ENCODE measurements at regions of chr3 and their contacts with region 1.

Region 1: DNA sequence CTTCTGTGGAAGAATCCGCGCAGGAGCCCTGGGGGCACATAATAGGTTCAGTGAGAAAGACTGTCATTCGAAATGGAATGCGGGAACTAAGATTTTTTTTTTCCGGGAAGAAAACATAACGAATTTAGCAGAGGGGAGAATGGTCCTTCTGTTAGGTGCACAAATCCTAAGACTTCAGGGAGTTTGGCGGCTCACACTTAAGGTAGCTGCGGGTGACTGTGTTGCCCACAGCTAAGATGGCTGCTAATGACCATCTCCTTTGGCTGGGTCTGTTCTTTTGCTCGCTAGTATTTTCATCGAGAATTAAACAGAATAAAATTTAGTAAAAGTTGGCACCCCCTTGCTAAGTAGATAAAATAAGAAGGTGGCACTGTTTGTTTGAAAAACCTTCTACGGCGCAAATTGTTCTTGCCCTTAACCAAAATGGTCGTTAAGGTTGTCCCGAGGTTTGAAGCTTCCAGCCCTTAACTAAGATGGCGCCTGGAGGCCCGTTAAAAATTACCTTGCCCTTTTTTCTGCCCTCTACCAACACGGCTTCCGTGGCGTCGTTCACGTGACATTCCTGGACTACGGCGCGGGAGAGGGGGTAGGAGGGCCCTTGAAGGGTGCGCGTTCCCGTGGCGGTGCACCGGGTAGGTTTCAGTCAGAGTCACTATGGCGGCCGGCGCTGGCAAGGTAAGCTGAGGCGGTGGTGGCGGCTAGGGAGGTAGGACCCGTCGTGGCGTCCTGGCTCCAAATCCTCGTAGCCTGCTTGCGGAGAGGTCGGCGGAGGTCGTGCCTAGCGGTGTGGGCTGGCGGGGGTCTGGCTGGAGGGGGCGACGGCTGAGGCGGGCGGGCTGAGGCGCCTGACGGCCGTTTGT is at the start of gene SLMAP:
- DNase-seq: peak; percentile 94 to 97 (median 96)
- H3K4me3 ChIP-seq: peak within 1 kb of the TSS; percentile 98
- H3K27ac ChIP-seq: peak within 1 kb of the TSS; percentile 76 to 94
- H3K4me1 ChIP-seq: peaks cover 9% of the 10 kb centered on the region
- H3K27me3 ChIP-seq: no peaks in the 10 kb centered on the region
- CTCF ChIP-seq: no peak
- EP300 ChIP-seq: no peak
- POLR2A ChIP-seq: peak; percentile 53
- total RNA-seq, gene SLMAP: 45.8 to 113 (median 75.2) TPM

Region 2: DNA sequence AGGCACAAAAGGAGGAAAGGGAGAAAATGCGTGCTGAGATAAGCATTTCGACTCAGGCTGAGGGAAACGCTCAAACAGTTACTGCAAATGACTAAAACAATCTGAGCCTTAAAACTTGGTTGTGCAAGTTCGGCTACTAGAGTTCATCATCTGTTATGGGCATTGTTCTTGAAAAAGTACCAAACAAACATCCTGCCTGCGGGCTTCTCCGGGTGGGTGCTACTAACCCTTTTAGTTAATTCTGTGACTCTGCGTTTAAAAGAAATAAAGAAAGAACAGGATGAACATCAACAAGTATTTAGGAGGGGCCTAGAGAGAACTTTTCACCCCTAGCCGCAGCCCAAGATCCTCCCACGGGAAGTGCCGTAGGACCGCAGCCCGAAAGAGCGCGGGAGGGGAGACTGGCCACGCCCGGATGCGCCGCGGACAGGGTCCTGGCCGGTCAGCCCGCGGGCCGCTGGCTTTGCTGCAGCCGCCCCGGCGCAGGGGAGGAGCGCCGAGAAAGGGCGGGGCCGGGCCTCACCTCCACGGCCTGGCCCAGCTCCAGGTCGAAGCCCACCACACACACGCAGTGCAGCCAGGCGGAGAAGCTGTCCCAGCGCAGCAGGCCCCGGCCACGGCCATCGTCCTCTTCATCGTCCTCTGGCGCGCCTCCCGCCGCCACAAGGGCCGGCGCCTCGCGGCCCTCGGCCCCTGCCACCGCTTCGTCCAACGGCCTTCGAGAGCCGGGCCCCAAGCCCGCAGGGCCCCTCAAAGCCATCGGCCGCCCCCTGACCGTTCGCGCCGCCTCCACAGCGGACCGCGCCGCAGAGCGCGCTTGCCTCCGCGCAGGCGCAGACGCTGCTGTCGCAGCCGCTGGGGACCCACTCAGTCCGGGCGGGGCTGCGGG is 63.4 kb before region 1 on chr3 and contains the start of gene DENND6A:
- intact Hi-C with region 1: loop called in 1 of 4 experiments (anchors 5 kb)
- DNase-seq: peak; percentile 93 to 96 (median 95)
- H3K4me3 ChIP-seq: peak within 1 kb of the TSS; percentile 100
- H3K27ac ChIP-seq: peak within 1 kb of the TSS; percentile 98 to 99
- H3K4me1 ChIP-seq: peaks cover 11% of the 10 kb centered on the region
- H3K27me3 ChIP-seq: no peaks in the 10 kb centered on the region
- CTCF ChIP-seq: no peak
- EP300 ChIP-seq: no peak
- POLR2A ChIP-seq: peak; percentile 99
- total RNA-seq, gene DENND6A: 17.8 to 52.4 (median 39.9) TPM

Region 3: GRCh38 chr3:58082047-58082446 is 326.1 kb after region 1 on chr3:
- intact Hi-C with region 1: no loop called
- DNase-seq: no peak
- H3K4me3 ChIP-seq: no peak overlapping the region
- H3K27ac ChIP-seq: no peak overlapping the region
- H3K4me1 ChIP-seq: no peaks in the 10 kb centered on the region
- H3K27me3 ChIP-seq: no peaks in the 10 kb centered on the region
- CTCF ChIP-seq: no peak
- EP300 ChIP-seq: no peak
- POLR2A ChIP-seq: no peak